ENCODE measurements at regions of chr22 and their contacts with region 1.

Region 1: GRCh38 chr22:19432133-19432851 is at the start of gene MRPL40:
- DNase-seq: peak; percentile 90
- ATAC-seq: peak; percentile 86
- H3K4me3 Mint-ChIP-seq: peak within 1 kb of the TSS; percentile 93
- H3K27ac Mint-ChIP-seq: peak within 1 kb of the TSS; percentile 95
- H3K4me1 Mint-ChIP-seq: peaks cover 26% of the 10 kb centered on the region
- H3K27me3 Mint-ChIP-seq: no peaks in the 10 kb centered on the region
- total RNA-seq, gene MRPL40: 22.0 to 23.6 TPM

Region 2: DNA sequence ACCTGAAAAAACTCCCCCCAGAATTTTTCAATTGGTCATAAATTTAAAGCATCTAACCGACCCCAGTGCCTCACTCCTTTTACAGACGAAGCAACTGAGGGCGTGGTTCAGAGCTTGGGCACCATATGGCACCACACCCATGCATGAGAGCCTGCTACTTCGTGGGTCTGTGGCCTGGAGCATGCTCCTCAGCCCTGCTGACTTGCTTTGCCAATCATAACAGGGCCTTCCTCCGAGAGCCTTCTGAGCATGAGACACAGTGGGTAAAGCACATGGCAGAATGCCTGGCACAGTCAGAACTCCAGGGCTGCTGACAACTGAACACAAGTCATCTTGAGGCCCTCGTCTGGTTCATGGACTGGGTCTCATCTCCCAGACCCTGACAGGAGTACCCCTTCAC is 34.1 kb before region 1 on chr22:
- POLR2A ChIA-PET with region 1: no interaction called
- DNase-seq: no peak
- ATAC-seq: no peak
- H3K4me3 Mint-ChIP-seq: no peak overlapping the region
- H3K27ac Mint-ChIP-seq: no peak overlapping the region
- H3K4me1 Mint-ChIP-seq: no peaks in the 10 kb centered on the region
- H3K27me3 Mint-ChIP-seq: no peaks in the 10 kb centered on the region

Region 3: DNA sequence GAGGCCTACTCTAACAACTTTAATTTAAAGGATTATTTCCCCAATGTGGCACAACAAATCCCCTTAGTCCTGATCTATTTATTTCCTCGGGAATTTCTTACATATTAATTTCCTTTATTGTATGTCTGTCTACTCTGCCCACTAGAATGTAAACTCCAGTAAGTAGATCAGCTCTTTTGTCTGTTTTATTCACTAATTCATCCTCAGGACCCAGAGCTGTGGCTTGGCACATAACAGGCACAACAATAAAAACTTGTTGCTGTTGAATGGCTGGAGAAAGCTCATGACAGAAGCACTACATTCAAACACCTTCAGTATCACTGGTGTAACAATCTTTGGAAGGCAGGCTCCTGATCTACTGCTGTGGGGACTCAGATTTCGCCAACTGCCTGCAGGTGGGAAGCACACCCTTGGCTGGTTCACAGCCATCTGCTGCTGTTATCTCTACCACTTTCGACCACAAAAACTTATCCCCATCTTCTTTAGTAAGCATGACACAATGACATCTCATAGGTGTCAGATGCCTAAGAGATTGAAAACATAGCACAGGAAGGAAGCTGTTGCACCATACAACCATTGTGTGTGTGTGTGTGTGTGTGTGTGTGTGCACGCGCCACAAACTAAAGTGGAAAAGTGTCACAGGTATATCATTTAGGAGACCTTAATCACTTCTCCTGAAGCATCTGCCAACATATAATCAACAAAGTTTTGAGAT is 12.7 kb before region 1 on chr22:
- POLR2A ChIA-PET with region 1: interaction called, 28 read pairs
- DNase-seq: no peak
- ATAC-seq: peak; percentile 94
- H3K4me3 Mint-ChIP-seq: peak overlapping the region; percentile 55
- H3K27ac Mint-ChIP-seq: peak overlapping the region; percentile 89
- H3K4me1 Mint-ChIP-seq: peaks cover 52% of the 10 kb centered on the region
- H3K27me3 Mint-ChIP-seq: no peaks in the 10 kb centered on the region

Region 4: DNA sequence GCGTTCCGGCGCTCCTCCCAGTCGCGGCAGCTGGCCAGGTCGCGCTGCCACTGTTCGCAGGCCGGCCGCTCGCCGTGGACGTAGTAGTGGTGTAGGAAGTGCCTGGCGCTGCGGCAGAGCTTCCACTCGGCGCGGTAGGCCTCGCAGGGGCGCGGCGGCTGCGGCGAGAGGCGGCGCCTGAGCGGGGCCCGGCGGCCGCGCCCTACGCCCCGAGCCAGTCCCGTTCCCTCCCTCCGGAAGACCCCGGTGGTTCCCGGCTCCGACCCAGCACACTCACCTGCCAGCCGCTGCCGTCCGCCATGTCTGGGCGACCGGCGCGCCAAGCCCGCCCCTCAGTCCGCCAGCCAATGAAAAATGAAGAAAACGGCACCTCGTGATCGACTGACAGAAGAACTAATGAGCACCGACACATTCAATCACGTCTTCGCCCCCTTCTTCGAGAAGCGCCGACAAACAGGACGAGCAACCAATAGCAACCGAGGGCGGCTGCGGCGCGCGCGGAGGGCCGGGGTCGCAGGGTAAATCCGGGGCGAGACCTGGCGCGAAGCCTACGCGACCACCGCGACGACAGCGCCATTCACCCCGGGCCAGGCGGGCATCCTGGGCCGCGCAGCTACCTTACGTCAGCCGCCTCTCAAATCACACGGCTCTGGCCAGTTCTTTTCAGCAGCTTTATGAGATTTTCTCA is 15.2 kb after region 1 on chr22 and contains the start of gene C22orf39:
- POLR2A ChIA-PET with region 1: interaction called, 70 read pairs
- DNase-seq: peak; percentile 84
- ATAC-seq: peak; percentile 93
- H3K4me3 Mint-ChIP-seq: peak within 1 kb of the TSS; percentile 97
- H3K27ac Mint-ChIP-seq: peak within 1 kb of the TSS; percentile 97
- H3K4me1 Mint-ChIP-seq: peaks cover 33% of the 10 kb centered on the region
- H3K27me3 Mint-ChIP-seq: no peaks in the 10 kb centered on the region
- total RNA-seq, gene C22orf39: 42.2 to 47.4 TPM

Region 5: GRCh38 chr22:19479357-19480172 is 47.3 kb after region 1 on chr22 and contains the start of gene CDC45:
- POLR2A ChIA-PET with region 1: interaction called, 16 read pairs
- DNase-seq: peak; percentile 84
- ATAC-seq: peak; percentile 94
- H3K4me3 Mint-ChIP-seq: peak within 1 kb of the TSS; percentile 100
- H3K27ac Mint-ChIP-seq: peak within 1 kb of the TSS; percentile 97
- H3K4me1 Mint-ChIP-seq: peaks cover 35% of the 10 kb centered on the region
- H3K27me3 Mint-ChIP-seq: no peaks in the 10 kb centered on the region
- total RNA-seq, gene CDC45: 54.2 to 56.1 TPM

Measured in activated naive CD8-positive, alpha-beta T cell treated with anti-CD3 and anti-CD28 coated beads, Interleukin-2, amount 10 ng/mL, durations not matched to agents 7 days and 5 days (primary cell).